Activated CD8-positive, alpha-beta memory T cell treated with anti-CD3 and anti-CD28 coated beads, Interleukin-2, amount 10 ng/mL, durations not matched to agents 7 days and 5 days (primary cell): ENCODE measurements at regions of chr3 and their contacts with region 1.

Region 1: GRCh38 chr3:48989796-48990635 is at the start of gene P4HTM:
- DNase-seq: peak; percentile 91
- ATAC-seq: peak; percentile 81
- H3K4me3 Mint-ChIP-seq: peak within 1 kb of the TSS; percentile 97
- H3K27ac Mint-ChIP-seq: peak within 1 kb of the TSS; percentile 93
- H3K4me1 Mint-ChIP-seq: peaks cover 50% of the 10 kb centered on the region
- H3K27me3 Mint-ChIP-seq: no peaks in the 10 kb centered on the region
- total RNA-seq, gene P4HTM: 44.5 to 50.6 TPM

Region 2: DNA sequence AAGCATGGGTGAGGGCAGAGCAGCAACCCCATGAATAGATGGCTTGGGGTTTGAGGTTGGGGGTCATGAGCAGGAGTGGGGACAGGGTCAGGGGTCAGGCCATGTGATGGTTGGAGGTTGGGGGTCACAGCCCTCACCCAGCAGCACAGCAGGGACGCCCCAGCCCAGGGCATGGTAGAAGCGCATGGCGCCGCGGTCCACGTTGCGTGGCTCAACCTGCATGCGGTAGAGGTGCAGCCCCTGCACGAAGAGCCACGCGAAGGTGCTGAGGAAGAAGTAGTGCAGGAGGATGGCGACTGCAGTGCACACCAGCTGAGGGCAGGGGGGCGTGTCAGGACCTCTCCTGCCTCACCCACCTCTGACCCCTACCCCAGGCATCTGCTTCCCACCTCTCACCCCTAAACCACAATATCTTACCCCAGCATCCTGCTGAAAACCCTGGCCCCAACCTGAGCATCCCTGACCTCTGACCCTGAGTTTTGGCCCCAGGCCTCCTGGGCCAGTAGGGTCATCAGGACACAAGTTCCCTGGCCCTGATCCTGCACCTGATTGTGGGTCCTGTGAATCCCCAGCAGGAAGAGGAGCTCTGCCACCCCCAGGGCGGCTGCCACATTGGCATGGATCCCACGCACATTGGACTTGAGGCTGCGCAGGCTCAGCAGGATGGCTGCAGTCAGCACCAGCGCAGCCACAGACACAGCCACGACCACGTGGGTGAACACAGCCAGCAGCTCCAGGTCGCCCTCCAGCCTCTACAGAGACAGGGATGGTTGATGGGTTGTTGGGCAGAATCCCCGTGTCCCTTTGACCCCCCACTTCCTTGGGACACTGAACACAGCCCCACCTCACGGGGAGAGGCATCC is 344.9 kb before region 1 on chr3:
- CTCF ChIA-PET with region 1: no interaction called
- DNase-seq: no peak
- ATAC-seq: no peak
- H3K4me3 Mint-ChIP-seq: no peak overlapping the region
- H3K27ac Mint-ChIP-seq: no peak overlapping the region
- H3K4me1 Mint-ChIP-seq: no peaks in the 10 kb centered on the region
- H3K27me3 Mint-ChIP-seq: no peaks in the 10 kb centered on the region

Region 3: DNA sequence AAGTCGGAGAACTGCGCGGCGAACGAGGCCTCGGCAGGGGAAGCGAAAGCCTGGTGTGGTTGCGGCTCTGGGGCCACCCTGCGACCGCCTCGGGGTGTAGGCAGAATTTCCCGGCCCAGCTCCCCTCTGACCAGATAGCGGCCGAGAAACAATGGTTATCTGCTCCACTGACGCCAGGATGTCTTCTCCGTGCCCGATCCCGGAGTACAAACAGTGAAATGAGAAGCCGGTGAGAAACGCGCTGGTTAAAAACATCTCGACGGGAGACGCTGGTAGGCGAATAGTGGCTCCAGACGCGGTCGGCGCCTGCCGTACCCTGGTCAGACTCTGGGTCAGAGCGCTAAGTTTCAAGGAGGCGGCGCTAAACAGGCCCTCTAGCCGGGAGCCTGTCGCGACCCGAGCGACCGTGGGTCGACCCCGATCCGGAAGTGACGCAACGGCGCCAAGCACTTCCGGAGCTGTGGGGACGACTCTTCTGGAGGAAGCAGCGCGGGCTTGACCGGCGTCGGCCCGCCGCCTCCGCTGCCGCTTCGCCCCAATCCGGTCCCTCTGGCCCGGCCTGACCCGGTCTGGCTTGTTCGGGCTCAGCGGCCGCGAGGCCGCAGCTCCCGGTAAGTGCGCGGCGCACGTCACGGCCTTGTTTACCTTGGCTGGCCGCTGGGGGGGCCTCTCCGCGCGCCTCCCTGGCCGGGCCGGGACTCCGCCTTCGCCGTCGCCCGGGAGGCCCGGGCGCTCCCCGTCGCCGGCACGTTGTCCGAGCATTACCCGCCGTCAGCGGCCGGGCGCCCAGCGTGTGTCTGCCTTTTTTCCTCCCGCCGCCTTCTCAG is 71.4 kb before region 1 on chr3 and contains the start of gene ARIH2:
- CTCF ChIA-PET with region 1: interaction called, 10 read pairs
- DNase-seq: peak; percentile 96
- ATAC-seq: peak; percentile 84
- H3K4me3 Mint-ChIP-seq: peak within 1 kb of the TSS; percentile 85
- H3K27ac Mint-ChIP-seq: peak within 1 kb of the TSS; percentile 100
- H3K4me1 Mint-ChIP-seq: peaks cover 27% of the 10 kb centered on the region
- H3K27me3 Mint-ChIP-seq: no peaks in the 10 kb centered on the region
- total RNA-seq, gene ARIH2: 118 to 156 TPM

Region 4: DNA sequence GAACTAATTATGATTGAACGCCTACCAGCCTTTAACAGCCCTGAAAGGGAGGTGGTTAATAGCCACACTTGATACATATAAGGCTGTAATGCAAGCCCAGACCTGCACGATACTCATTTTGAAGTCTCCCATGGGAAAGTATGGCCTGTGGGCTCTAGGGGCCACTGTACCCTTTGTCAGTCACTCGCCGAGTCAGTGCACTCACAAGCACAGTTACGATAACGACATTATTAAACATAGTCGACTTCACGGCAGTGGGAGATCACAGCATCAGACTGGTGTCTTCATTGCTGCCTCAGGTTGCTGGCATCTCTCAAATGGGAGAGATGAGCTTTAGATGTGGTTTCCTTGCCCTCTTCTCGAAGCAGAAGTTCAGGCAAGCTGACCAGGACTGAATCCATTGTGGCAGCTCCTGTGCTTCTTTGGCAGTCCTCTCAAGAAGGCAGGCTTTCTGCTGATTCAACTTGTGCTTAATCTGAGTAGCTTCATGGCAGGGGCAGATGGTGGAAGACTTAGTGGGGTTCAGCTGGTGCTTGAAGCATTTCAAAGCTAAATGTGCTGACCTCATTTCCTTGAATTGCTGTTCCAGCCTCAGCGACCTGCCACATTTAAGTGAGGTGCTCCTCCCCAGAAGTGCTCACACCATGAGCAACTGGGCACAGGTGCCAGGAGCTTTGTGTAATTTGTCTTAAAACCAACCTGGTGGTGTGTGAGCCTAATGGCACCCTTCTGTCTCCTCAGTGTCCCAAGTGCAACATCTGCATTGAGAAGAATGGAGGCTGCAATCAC is 15.7 kb before region 1 on chr3:
- CTCF ChIA-PET with region 1: interaction called, 12 read pairs
- DNase-seq: no peak
- ATAC-seq: no peak
- H3K4me3 Mint-ChIP-seq: no peak overlapping the region
- H3K27ac Mint-ChIP-seq: peak overlapping the region; percentile 26
- H3K4me1 Mint-ChIP-seq: peaks cover 5% of the 10 kb centered on the region
- H3K27me3 Mint-ChIP-seq: no peaks in the 10 kb centered on the region

Region 5: GRCh38 chr3:49007068-49007770 is 17.2 kb after region 1 on chr3 and contains the start of gene WDR6:
- CTCF ChIA-PET with region 1: interaction called, 127 read pairs
- DNase-seq: peak; percentile 99
- ATAC-seq: peak; percentile 91
- H3K4me3 Mint-ChIP-seq: peak within 1 kb of the TSS; percentile 87
- H3K27ac Mint-ChIP-seq: peak within 1 kb of the TSS; percentile 95
- H3K4me1 Mint-ChIP-seq: peaks cover 23% of the 10 kb centered on the region
- H3K27me3 Mint-ChIP-seq: no peaks in the 10 kb centered on the region
- total RNA-seq, gene WDR6: 130 to 154 TPM

Region 6: DNA sequence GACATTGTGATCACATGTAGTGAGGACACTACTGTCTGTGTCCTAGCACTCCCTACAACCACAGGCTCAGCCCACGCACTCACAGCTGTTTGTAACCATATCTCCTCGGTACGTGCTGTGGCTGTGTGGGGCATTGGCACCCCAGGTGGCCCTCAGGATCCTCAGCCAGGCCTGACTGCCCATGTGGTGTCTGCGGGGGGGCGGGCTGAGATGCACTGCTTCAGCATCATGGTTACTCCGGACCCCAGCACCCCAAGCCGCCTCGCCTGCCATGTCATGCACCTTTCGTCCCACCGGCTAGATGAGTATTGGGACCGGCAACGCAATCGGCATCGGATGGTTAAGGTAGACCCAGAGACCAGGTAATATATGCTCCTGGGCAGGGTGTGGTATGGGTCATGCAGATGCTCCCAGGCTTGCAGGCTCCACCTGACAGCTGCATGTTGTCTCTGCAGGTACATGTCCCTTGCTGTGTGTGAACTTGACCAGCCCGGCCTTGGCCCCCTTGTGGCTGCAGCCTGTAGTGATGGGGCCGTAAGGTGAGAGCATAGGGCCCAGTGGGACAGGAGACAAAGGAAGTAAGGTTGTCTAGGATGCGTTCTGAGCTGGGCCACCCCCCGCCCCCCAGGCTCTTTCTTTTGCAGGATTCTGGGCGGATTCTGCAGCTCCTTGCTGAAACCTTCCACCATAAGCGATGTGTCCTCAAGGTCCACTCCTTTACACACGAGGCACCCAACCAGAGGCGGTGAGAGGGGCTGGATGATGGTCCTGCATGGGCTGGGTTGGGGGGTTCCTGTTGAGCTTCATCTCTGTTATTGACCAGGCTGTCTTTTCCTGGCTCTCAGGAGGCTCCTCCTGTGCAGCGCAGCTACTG is 24.0 kb after region 1 on chr3:
- CTCF ChIA-PET with region 1: interaction called, 127 read pairs
- DNase-seq: peak; percentile 68
- ATAC-seq: peak; percentile 24
- H3K4me3 Mint-ChIP-seq: no peak overlapping the region
- H3K27ac Mint-ChIP-seq: no peak overlapping the region
- H3K4me1 Mint-ChIP-seq: peaks cover 25% of the 10 kb centered on the region
- H3K27me3 Mint-ChIP-seq: no peaks in the 10 kb centered on the region

Region 7: GRCh38 chr3:49021813-49022687 is 32.0 kb after region 1 on chr3 and contains the start of gene NDUFAF3:
- CTCF ChIA-PET with region 1: interaction called, 88 read pairs
- DNase-seq: peak; percentile 95
- ATAC-seq: peak; percentile 72
- H3K4me3 Mint-ChIP-seq: peak within 1 kb of the TSS; percentile 90
- H3K27ac Mint-ChIP-seq: peak within 1 kb of the TSS; percentile 98
- H3K4me1 Mint-ChIP-seq: peaks cover 61% of the 10 kb centered on the region
- H3K27me3 Mint-ChIP-seq: no peaks in the 10 kb centered on the region
- total RNA-seq, gene NDUFAF3: 94.3 to 101 TPM

Region 8: DNA sequence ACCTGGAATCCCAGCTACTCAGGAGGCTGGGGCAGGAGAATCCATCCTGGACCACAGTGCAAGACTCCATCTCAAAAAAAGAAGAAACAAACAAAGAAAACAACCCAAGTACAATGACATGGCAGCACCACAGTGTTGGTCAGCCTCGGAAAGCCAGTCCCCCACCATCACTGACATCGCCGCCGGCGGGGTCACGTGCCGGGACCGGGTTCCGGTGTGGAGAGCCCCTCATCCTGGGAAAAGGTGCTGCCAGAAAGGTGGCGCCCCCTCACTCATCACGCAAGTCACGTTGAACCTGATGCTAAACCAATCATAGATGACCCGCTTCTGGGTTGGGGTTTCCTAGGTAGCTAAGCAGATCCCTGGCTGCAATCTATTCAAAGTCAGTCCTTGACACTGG is 86.1 kb after region 1 on chr3:
- CTCF ChIA-PET with region 1: no interaction called
- DNase-seq: no peak
- ATAC-seq: no peak
- H3K4me3 Mint-ChIP-seq: no peak overlapping the region
- H3K27ac Mint-ChIP-seq: no peak overlapping the region
- H3K4me1 Mint-ChIP-seq: peaks cover 4% of the 10 kb centered on the region
- H3K27me3 Mint-ChIP-seq: no peaks in the 10 kb centered on the region

Region 9: GRCh38 chr3:49181351-49181750 is 191.3 kb after region 1 on chr3:
- CTCF ChIA-PET with region 1: no interaction called
- DNase-seq: no peak
- ATAC-seq: no peak
- H3K4me3 Mint-ChIP-seq: no peak overlapping the region
- H3K27ac Mint-ChIP-seq: no peak overlapping the region
- H3K4me1 Mint-ChIP-seq: no peaks in the 10 kb centered on the region
- H3K27me3 Mint-ChIP-seq: peaks cover 4% of the 10 kb centered on the region